Activated CD8-positive, alpha-beta T cell treated with anti-CD3 and anti-CD28 coated beads for 36 hours (primary cell): ENCODE measurements at regions of chr17 and their contacts with region 1.

Region 1: DNA sequence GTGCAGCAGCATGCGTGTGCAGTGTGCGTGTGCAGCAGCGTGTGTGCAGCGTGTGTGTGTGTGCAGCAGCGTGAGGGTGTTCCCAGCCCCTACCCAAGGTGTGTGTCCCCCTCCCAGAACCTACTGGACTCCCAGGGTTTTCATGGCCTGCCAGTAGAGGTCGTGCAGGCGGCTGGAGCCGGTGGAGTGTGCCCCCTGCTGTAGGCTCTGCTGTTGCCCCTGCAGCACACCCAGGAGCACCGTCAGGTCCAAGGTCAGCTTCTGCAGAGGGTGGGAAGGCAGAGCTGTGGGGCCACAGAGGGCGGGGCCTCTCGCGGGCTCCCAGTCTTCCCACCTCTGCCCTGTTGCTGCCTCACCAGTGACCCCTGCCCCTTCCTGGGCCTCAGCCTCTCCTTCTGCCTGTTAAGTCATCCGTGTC is 15.0 kb downstream of the MYBBP1A start:
- DNase-seq: no peak
- ATAC-seq: no peak
- H3K4me3 Mint-ChIP-seq: no peak overlapping the region
- H3K27ac Mint-ChIP-seq: no peak overlapping the region
- H3K4me1 Mint-ChIP-seq: no peaks in the 10 kb centered on the region
- H3K27me3 Mint-ChIP-seq: no peaks in the 10 kb centered on the region
- CTCF ChIP-seq: no peak

Region 2: DNA sequence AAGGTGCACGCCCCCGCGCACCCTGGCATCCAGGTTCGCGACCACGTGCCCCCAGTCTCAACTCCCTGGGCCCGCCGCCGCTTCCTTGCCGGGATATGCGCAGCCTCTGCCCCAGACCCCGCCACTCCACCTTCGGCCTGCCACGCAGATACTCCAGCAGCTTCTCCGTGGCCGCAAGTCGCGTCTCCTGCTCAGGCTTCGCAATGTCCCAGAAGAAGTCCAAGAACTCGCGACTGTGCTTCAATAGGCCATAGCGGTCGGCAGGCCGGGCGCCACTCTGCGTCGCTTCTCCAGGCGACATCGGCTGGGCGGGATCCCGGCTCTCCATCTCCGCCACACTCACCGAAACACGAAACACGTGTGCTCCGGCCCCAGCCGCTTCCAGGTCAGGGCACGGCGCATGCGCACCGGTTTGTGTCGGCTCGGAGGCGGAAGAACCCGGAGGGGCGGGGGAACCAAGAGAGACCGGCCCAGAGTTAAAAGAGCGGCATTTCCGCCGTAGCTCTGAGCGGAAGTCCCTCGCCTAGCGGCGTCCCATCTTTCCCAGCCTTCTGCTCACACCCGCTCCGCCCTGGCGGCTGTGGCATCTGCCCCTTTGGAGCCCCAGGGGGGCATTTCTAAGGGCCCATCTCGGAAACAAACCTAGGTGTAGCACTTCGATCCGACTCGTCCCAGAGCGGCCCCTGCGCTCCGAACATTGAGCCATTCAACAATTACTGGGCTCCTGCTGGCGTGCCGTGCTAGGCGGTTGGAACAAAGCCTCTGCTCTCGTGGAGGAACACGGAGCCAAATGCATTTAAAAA is 15.0 kb after region 1 on chr17 and contains the start of gene MYBBP1A:
- CTCF ChIA-PET with region 1: no interaction called
- POLR2A ChIA-PET with region 1: interaction called, 45 read pairs
- intact Hi-C with region 1: no loop called
- DNase-seq: peak; percentile 98
- ATAC-seq: peak; percentile 95
- H3K4me3 Mint-ChIP-seq: peak within 1 kb of the TSS; percentile 97
- H3K27ac Mint-ChIP-seq: peak within 1 kb of the TSS; percentile 95
- H3K4me1 Mint-ChIP-seq: peaks cover 22% of the 10 kb centered on the region
- H3K27me3 Mint-ChIP-seq: no peaks in the 10 kb centered on the region
- CTCF ChIP-seq: no peak
- total RNA-seq, gene MYBBP1A: 104 to 107 TPM